ENCODE measurements at regions of chr5 and their contacts with region 1.

Region 1: DNA sequence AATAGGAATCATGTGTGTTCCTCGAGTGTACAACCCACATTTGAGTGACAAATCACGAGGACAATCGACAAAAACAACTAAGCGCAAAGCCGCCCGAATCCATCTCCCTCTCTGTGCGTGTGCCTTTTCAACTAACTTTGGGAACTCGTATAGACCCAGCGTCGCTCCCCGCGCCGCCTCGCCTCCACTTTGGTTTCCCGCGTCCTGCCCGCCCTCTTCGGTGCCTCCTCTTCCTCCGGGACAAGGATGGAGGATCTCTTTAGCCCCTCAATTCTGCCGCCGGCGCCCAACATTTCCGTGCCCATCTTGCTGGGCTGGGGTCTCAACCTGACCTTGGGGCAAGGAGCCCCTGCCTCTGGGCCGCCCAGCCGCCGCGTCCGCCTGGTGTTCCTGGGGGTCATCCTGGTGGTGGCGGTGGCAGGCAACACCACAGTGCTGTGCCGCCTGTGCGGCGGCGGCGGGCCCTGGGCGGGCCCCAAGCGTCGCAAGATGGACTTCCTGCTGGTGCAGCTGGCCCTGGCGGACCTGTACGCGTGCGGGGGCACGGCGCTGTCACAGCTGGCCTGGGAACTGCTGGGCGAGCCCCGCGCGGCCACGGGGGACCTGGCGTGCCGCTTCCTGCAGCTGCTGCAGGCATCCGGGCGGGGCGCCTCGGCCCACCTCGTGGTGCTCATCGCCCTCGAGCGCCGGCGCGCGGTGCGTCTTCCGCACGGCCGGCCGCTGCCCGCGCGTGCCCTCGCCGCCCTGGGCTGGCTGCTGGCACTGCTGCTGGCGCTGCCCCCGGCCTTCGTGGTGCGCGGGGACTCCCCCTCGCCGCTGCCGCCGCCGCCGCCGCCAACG is at the start of gene GPR150:
- DNase-seq: peak; percentile 79
- ATAC-seq: peak; percentile 73
- H3K4me3 Mint-ChIP-seq: peak within 1 kb of the TSS; percentile 78
- H3K27ac Mint-ChIP-seq: peak within 1 kb of the TSS; percentile 76
- H3K4me1 Mint-ChIP-seq: peaks cover 39% of the 10 kb centered on the region
- H3K27me3 Mint-ChIP-seq: peaks cover 1% of the 10 kb centered on the region
- CTCF ChIP-seq: peak; percentile 26
- total RNA-seq, gene GPR150: 0.45 to 0.76 TPM

Region 2: DNA sequence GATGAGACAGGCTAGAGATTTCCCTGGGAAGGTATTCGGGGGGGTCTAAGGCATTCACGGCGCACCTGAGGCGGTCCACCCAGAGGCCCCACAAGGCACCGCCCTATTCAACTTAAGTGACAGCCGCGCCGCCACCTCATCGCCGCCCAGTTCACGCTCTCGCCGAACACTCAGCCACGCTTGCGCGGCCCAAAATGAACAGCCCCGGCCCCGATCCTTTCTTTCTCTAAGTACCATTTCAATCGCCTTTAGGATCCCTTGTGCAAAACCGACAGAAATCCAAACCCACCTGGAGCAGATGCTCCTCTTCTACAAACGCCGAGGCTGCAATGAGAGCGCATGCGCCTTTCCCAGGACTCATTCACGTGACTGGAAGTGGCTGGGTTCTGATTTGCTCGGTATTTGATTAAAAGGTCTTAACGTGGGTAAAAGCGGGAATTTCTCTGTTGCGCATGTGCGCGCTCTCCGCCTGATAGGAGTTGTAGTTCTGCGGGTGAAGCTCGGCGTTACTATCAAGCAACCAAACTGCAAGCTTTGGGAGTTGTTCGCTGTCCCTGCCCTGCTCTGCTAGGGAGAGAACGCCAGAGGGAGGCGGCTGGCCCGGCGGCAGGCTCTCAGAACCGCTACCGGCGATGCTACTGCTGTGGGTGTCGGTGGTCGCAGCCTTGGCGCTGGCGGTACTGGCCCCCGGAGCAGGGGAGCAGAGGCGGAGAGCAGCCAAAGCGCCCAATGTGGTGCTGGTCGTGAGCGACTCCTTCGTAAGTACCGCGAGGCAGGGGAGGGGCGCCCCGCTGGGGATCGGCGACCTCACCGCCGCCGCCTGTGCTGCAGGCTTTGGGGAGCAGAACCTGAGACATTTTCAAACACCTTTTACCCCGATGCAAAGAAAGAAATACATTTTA is 65.4 kb before region 1 on chr5 and contains the starts of genes ARSK and SKIC3:
- CTCF ChIA-PET with region 1: no interaction called
- POLR2A ChIA-PET with region 1: interaction called, 3 read pairs
- intact Hi-C with region 1: loop called (anchors 5 kb)
- DNase-seq: peak; percentile 92
- ATAC-seq: peak; percentile 90
- H3K4me3 Mint-ChIP-seq: peak within 1 kb of the TSS; percentile 85
- H3K27ac Mint-ChIP-seq: peak within 1 kb of the TSS; percentile 91
- H3K4me1 Mint-ChIP-seq: peaks cover 35% of the 10 kb centered on the region
- H3K27me3 Mint-ChIP-seq: no peaks in the 10 kb centered on the region
- CTCF ChIP-seq: no peak
- total RNA-seq, gene ARSK: 4.9 to 5.0 TPM
- total RNA-seq, gene SKIC3: 68.2 to 70.0 TPM

Region 3: GRCh38 chr5:95631991-95632675 is 11.9 kb after region 1 on chr5:
- CTCF ChIA-PET with region 1: interaction called, 8 read pairs
- POLR2A ChIA-PET with region 1: interaction called, 23 read pairs
- intact Hi-C with region 1: no loop called
- DNase-seq: peak; percentile 87
- ATAC-seq: peak; percentile 99
- H3K4me3 Mint-ChIP-seq: peak overlapping the region; percentile 34
- H3K27ac Mint-ChIP-seq: peak overlapping the region; percentile 96
- H3K4me1 Mint-ChIP-seq: peaks cover 18% of the 10 kb centered on the region
- H3K27me3 Mint-ChIP-seq: peaks cover 3% of the 10 kb centered on the region
- CTCF ChIP-seq: no peak

Region 4: GRCh38 chr5:95743232-95743631 is 123.0 kb after region 1 on chr5:
- CTCF ChIA-PET with region 1: no interaction called
- POLR2A ChIA-PET with region 1: no interaction called
- intact Hi-C with region 1: no loop called
- DNase-seq: no peak
- ATAC-seq: no peak
- H3K4me3 Mint-ChIP-seq: no peak overlapping the region
- H3K27ac Mint-ChIP-seq: no peak overlapping the region
- H3K4me1 Mint-ChIP-seq: peaks cover 10% of the 10 kb centered on the region
- H3K27me3 Mint-ChIP-seq: peaks cover 6% of the 10 kb centered on the region
- CTCF ChIP-seq: no peak

Measured in activated CD8-positive, alpha-beta T cell treated with anti-CD3 and anti-CD28 coated beads for 36 hours (primary cell).